CD8-positive, alpha-beta T cell (primary cell): ENCODE measurements at regions of chr6 and their contacts with region 1.

Region 1: DNA sequence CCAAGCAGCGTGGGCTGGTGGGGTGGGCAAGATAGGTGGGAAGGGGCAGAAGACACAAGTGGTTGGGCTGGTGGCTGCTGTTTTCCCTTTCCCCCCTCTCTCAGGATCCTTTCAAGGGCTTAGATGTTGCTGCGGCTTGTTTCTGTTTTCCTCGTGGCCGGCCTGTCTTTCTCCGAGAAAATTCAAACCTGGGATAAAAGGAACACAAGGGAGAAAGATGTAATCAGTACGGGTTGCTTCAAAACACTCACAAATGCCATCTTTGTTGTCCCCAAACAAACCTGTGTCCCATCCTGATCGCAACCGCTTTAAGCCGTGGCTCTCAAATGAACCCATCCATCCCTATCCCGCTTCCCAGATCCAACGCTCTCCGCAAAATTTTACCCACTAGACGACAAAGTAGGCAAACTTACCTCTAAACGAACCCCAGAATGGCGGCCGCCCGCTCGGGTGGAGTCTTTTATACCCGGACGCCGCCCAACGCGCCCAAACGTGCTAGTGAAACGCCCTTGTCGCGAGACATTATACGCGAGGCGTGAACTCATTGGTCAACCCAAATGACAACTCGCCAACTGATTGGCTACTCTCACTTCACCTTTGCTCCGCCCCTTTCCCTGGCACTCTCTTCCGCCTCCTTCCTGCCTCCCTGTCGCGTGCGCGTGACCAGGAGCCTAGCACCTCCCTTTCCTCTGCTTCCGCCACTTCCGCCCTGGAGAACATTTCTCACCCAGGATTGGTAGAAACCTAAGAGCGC is at the start of gene PPP1R10:
- DNase-seq: peak; percentile 95 to 100 (median 97)
- ATAC-seq: peak; percentile 76
- H3K4me3 ChIP-seq: peak within 1 kb of the TSS; percentile 91 to 96
- H3K4me3 Mint-ChIP-seq: peak within 1 kb of the TSS; percentile 100
- H3K27ac ChIP-seq: peak within 1 kb of the TSS; percentile 99 to 100
- H3K27ac Mint-ChIP-seq: peak within 1 kb of the TSS; percentile 100
- H3K4me1 ChIP-seq: peaks cover 43% of the 10 kb centered on the region
- H3K4me1 Mint-ChIP-seq: peaks cover 45% of the 10 kb centered on the region
- H3K27me3 ChIP-seq: no peaks in the 10 kb centered on the region
- H3K27me3 Mint-ChIP-seq: no peaks in the 10 kb centered on the region
- CTCF ChIP-seq: no peak
- total RNA-seq, gene PPP1R10: 85.5 to 95.4 TPM

Region 2: GRCh38 chr6:30326526-30327260 is 290.3 kb before region 1 on chr6 and contains the start of gene TRIM39:
- CTCF ChIA-PET with region 1: no interaction called
- POLR2A ChIA-PET with region 1: interaction called, 4 read pairs
- intact Hi-C with region 1: loop called (anchors 5 to 10 kb)
- DNase-seq: peak; percentile 75 to 97 (median 90)
- ATAC-seq: peak; percentile 58
- H3K4me3 ChIP-seq: peak within 1 kb of the TSS; percentile 74 to 87
- H3K4me3 Mint-ChIP-seq: peak within 1 kb of the TSS; percentile 96
- H3K27ac ChIP-seq: peak within 1 kb of the TSS; percentile 95 to 99
- H3K27ac Mint-ChIP-seq: peak within 1 kb of the TSS; percentile 98
- H3K4me1 ChIP-seq: peaks cover 41% of the 10 kb centered on the region
- H3K4me1 Mint-ChIP-seq: peaks cover 59% of the 10 kb centered on the region
- H3K27me3 ChIP-seq: no peaks in the 10 kb centered on the region
- H3K27me3 Mint-ChIP-seq: no peaks in the 10 kb centered on the region
- CTCF ChIP-seq: no peak
- total RNA-seq, gene TRIM39: 50.7 to 58.5 TPM

Region 3: DNA sequence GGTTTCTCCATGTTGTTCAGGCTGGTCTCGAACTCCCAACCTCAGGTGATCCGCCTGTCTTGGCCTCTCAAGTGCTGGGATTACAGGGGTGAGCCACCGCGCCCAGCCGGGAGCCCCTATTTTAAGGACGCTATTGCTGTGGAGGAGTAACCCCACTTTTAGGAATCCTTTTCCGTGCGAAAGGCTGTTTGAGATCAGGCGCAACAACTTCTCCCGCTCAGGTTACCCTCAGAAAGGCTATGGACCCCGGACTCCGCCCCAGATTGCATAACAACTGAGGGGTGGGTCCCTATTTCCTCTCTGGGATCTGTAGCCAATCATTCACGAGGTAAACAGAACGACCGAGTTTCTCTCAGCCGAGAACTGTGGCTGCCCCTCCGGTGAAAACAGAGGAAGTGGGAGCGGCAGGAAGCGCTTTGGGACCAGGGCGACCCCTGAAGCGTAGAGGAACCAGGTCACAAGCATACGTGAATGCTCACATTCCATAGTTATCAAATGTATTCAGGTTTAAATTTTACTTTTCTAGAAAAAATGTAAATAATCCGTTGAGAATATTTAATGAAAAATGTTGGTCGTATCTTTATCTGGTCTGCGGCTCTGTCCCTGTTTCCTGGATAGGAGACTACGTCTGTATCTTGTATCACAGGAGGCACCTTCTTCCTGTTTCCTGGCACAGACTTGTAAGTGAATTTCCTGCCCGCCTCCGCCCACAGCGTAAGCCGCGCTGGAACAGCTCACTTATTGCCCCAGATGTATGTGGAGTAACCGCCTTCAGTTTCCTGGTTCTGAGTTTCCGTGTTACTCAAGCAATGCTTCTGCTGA is 100.8 kb before region 1 on chr6:
- CTCF ChIA-PET with region 1: no interaction called
- POLR2A ChIA-PET with region 1: interaction called, 14 read pairs
- intact Hi-C with region 1: loop called in 1 of 2 experiments (anchors 1 kb)
- DNase-seq: peak; percentile 77 to 98 (median 90)
- ATAC-seq: peak; percentile 83
- H3K4me3 ChIP-seq: peak overlapping the region; percentile 36 to 43
- H3K4me3 Mint-ChIP-seq: peak overlapping the region; percentile 83
- H3K27ac ChIP-seq: peak overlapping the region; percentile 82 to 99
- H3K27ac Mint-ChIP-seq: peak overlapping the region; percentile 99
- H3K4me1 ChIP-seq: peaks cover 61% of the 10 kb centered on the region
- H3K4me1 Mint-ChIP-seq: peaks cover 63% of the 10 kb centered on the region
- H3K27me3 ChIP-seq: no peaks in the 10 kb centered on the region
- H3K27me3 Mint-ChIP-seq: no peaks in the 10 kb centered on the region
- CTCF ChIP-seq: no peak

Region 4: DNA sequence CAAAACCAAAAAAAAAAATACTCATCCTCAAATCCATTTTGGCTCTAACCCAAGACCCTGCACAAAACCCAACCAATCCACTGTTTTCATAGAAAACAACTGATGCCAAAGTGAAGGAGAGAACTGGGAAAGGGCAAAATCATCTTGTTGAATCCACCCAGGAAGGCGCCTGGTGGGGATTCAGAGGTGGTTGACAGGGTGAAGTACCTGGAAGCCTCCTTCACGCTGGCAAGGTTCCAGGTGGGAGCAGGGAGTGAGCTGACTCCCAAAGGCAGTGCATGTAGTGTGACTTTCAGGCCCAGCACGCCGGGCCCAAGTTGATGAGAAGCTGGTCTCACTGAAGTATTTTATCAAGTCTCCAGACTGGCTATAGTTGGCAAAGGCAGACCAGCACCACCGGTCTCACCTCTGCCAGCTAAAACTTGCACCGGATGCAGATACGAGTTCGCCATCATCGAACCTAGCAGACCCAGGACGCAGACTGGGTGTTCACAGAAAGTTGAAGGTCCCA is 16.5 kb before region 1 on chr6:
- CTCF ChIA-PET with region 1: interaction called, 11 read pairs
- POLR2A ChIA-PET with region 1: interaction called, 100 read pairs
- intact Hi-C with region 1: no loop called
- DNase-seq: no peak
- ATAC-seq: no peak
- H3K4me3 ChIP-seq: no peak overlapping the region
- H3K4me3 Mint-ChIP-seq: no peak overlapping the region
- H3K27ac ChIP-seq: peak overlapping the region in 1 of 2 experiments; percentile 67
- H3K27ac Mint-ChIP-seq: no peak overlapping the region
- H3K4me1 ChIP-seq: peaks cover 15% of the 10 kb centered on the region
- H3K4me1 Mint-ChIP-seq: peaks cover 22% of the 10 kb centered on the region
- H3K27me3 ChIP-seq: no peaks in the 10 kb centered on the region
- H3K27me3 Mint-ChIP-seq: no peaks in the 10 kb centered on the region
- CTCF ChIP-seq: no peak

Region 5: GRCh38 chr6:30678964-30679726 is 62.2 kb after region 1 on chr6:
- CTCF ChIA-PET with region 1: interaction called, 8 read pairs
- POLR2A ChIA-PET with region 1: interaction called, 20 read pairs
- intact Hi-C with region 1: loop called (anchors 2 kb)
- DNase-seq: peak; percentile 88 to 98 (median 92)
- ATAC-seq: peak; percentile 32
- H3K4me3 ChIP-seq: peak overlapping the region; percentile 86 to 95
- H3K4me3 Mint-ChIP-seq: peak overlapping the region; percentile 99
- H3K27ac ChIP-seq: peak overlapping the region; percentile 21 to 85
- H3K27ac Mint-ChIP-seq: peak overlapping the region; percentile 99
- H3K4me1 ChIP-seq: peaks cover 27% of the 10 kb centered on the region
- H3K4me1 Mint-ChIP-seq: peaks cover 38% of the 10 kb centered on the region
- H3K27me3 ChIP-seq: no peaks in the 10 kb centered on the region
- H3K27me3 Mint-ChIP-seq: no peaks in the 10 kb centered on the region
- CTCF ChIP-seq: peak; percentile 92

Region 6: GRCh38 chr6:31862344-31863227 is 1245.6 kb after region 1 on chr6 and contains the start of gene NEU1:
- CTCF ChIA-PET with region 1: no interaction called
- POLR2A ChIA-PET with region 1: no interaction called
- intact Hi-C with region 1: loop called in 1 of 2 experiments (anchors 2 kb)
- DNase-seq: peak; percentile 97 to 100 (median 98)
- ATAC-seq: peak; percentile 91
- H3K4me3 ChIP-seq: peak within 1 kb of the TSS; percentile 75 to 94
- H3K4me3 Mint-ChIP-seq: peak within 1 kb of the TSS; percentile 95
- H3K27ac ChIP-seq: peak within 1 kb of the TSS; percentile 77 to 97
- H3K27ac Mint-ChIP-seq: peak within 1 kb of the TSS; percentile 98
- H3K4me1 ChIP-seq: peaks cover 17% of the 10 kb centered on the region
- H3K4me1 Mint-ChIP-seq: peaks cover 23% of the 10 kb centered on the region
- H3K27me3 ChIP-seq: no peaks in the 10 kb centered on the region
- H3K27me3 Mint-ChIP-seq: no peaks in the 10 kb centered on the region
- CTCF ChIP-seq: no peak
- total RNA-seq, gene NEU1: 30.0 to 30.2 TPM